ENCODE measurements at regions of chr14 and their contacts with region 1.

Region 1: DNA sequence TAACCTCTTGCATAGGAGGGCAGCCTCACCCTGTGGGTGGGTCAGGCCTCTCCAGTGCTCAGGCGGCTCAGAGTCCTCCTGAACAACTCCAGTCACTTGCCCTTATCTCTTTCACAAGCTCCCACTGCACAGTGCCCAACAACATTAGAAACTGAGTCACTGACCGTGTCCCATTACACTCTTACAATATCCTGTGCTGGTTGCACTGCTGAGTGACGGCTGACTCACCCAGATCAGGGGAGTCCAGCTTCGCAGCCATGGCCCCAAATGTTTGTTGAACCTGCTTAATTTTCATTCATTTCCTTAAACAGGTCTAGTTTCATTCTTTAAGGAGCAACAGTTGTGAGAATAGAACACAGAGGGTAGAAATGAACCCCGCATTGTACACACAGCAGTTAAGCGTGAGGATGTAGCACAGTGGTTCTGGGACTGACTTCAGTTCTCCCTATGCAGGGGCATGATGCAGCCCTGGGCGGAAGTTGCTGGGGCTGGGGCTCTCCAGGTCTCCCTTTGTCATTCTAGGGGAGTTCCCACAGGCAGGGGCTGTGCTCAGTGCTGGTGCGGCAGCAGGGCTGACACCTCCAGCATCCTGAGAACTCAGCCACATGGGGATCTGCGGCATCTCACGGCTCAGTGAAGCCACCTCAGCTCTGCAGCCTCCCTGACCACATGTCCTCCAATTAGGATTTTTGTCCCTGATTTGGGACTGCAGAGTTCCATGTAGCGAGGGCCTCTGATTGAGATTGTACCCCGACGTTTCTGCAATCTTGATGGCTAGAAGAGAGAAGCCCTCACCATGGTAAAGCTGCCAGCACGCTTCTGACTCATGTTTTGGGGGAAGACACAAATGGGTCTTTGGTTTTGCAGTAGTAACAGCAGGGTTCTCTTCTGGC is 16.1 kb downstream of the GPR68 start:
- DNase-seq: peak; percentile 71
- ATAC-seq: peak; percentile 75
- H3K4me3 ChIP-seq: no peak overlapping the region
- H3K4me3 Mint-ChIP-seq: peak overlapping the region; percentile 38
- H3K27ac ChIP-seq: peak overlapping the region; percentile 22 to 59
- H3K27ac Mint-ChIP-seq: peak overlapping the region; percentile 71
- H3K4me1 ChIP-seq: peaks cover 70 to 73% of the 10 kb centered on the region in 2 donors
- H3K4me1 Mint-ChIP-seq: peaks cover 68% of the 10 kb centered on the region
- H3K27me3 ChIP-seq: no peaks in the 10 kb centered on the region
- H3K27me3 Mint-ChIP-seq: no peaks in the 10 kb centered on the region
- CTCF ChIP-seq: no peak

Region 2: DNA sequence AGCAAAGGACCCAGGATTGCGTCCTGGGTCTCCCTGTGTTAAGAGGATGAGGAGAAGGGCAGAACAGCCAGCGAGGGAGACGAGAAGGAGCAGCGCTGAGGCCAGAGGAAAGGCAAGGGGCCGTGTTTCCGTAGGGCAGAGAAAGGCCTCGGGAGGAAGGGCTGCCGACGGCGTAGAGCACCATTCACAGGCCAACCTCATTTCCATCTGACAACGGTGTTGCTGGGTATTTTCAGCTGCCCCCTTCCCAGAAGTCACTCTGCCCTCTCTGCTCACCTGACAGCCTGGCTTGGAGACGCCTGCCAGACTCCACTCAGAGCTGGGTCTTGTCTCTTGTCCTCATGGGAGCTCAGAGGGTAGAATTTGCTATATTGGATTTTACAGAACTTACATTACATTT is 35.3 kb before region 1 on chr14:
- CTCF ChIA-PET with region 1: no interaction called
- POLR2A ChIA-PET with region 1: no interaction called
- intact Hi-C with region 1: no loop called
- DNase-seq: no peak
- ATAC-seq: no peak
- H3K4me3 ChIP-seq: no peak overlapping the region
- H3K4me3 Mint-ChIP-seq: no peak overlapping the region
- H3K27ac ChIP-seq: no peak overlapping the region
- H3K27ac Mint-ChIP-seq: no peak overlapping the region
- H3K4me1 ChIP-seq: no peaks in the 10 kb centered on the region
- H3K4me1 Mint-ChIP-seq: no peaks in the 10 kb centered on the region
- H3K27me3 ChIP-seq: no peaks in the 10 kb centered on the region
- H3K27me3 Mint-ChIP-seq: no peaks in the 10 kb centered on the region
- CTCF ChIP-seq: no peak

Region 3: DNA sequence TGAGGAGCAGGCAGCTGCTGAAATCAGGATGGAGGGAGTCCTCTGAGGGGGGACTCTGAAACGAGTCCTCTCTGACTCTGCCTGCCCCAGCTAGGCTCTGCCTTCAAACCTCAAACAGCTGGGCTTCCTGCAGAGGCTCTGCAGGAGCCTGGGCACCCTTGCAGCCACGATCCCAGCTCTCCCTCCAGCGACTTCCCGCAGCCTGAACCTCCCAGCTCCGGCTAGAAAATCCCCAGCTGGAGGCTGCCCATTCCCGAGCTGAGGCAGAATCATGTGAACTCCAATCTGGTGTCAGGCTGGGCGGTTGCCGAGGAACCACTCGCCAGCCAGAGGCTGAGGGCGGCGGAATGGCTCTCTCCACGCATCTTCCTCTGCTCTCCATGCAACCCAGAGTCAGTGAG is 16.1 kb after region 1 on chr14 and contains the start of gene GPR68:
- CTCF ChIA-PET with region 1: interaction called, 11 read pairs
- POLR2A ChIA-PET with region 1: interaction called, 9 read pairs
- intact Hi-C with region 1: loop called (anchors 1 kb)
- DNase-seq: no peak
- ATAC-seq: no peak
- H3K4me3 ChIP-seq: peak within 1 kb of the TSS in 2 of 5 experiments; percentile 30 to 37
- H3K4me3 Mint-ChIP-seq: peak within 1 kb of the TSS; percentile 75
- H3K27ac ChIP-seq: peak within 1 kb of the TSS; percentile 57 to 79
- H3K27ac Mint-ChIP-seq: peak within 1 kb of the TSS; percentile 91
- H3K4me1 ChIP-seq: peaks cover 46 to 55% of the 10 kb centered on the region in 2 donors
- H3K4me1 Mint-ChIP-seq: peaks cover 62% of the 10 kb centered on the region
- H3K27me3 ChIP-seq: no peaks in the 10 kb centered on the region
- H3K27me3 Mint-ChIP-seq: no peaks in the 10 kb centered on the region
- CTCF ChIP-seq: no peak
- total RNA-seq, gene GPR68: 0.34 and 0.53 TPM in 2 replicates

Region 4: GRCh38 chr14:91264151-91265150 is 36.1 kb after region 1 on chr14:
- CTCF ChIA-PET with region 1: no interaction called
- POLR2A ChIA-PET with region 1: no interaction called
- intact Hi-C with region 1: loop called (anchors 5 kb)
- DNase-seq: peak; percentile 33
- ATAC-seq: peak; percentile 60
- H3K4me3 ChIP-seq: peak overlapping the region in 3 of 5 experiments; percentile 29 to 51 (median 30)
- H3K4me3 Mint-ChIP-seq: peak overlapping the region; percentile 81
- H3K27ac ChIP-seq: no peak overlapping the region
- H3K27ac Mint-ChIP-seq: peak overlapping the region; percentile 15
- H3K4me1 ChIP-seq: peaks cover 10 to 11% of the 10 kb centered on the region in 2 donors
- H3K4me1 Mint-ChIP-seq: peaks cover 18% of the 10 kb centered on the region
- H3K27me3 ChIP-seq: peaks cover 0 to 11% (median 3%) of the 10 kb centered on the region in 4 experiments
- H3K27me3 Mint-ChIP-seq: peaks cover 15% of the 10 kb centered on the region
- CTCF ChIP-seq: no peak

Region 5: GRCh38 chr14:92175811-92176210 is 947.5 kb after region 1 on chr14:
- CTCF ChIA-PET with region 1: no interaction called
- POLR2A ChIA-PET with region 1: no interaction called
- intact Hi-C with region 1: no loop called
- DNase-seq: no peak
- ATAC-seq: no peak
- H3K4me3 ChIP-seq: no peak overlapping the region
- H3K4me3 Mint-ChIP-seq: no peak overlapping the region
- H3K27ac ChIP-seq: no peak overlapping the region
- H3K27ac Mint-ChIP-seq: no peak overlapping the region
- H3K4me1 ChIP-seq: no peaks in the 10 kb centered on the region
- H3K4me1 Mint-ChIP-seq: no peaks in the 10 kb centered on the region
- H3K27me3 ChIP-seq: no peaks in the 10 kb centered on the region
- H3K27me3 Mint-ChIP-seq: no peaks in the 10 kb centered on the region
- CTCF ChIP-seq: no peak